CD4-positive, alpha-beta T cell (primary cell): ENCODE measurements at regions of chr11 and their contacts with region 1.

Region 1: DNA sequence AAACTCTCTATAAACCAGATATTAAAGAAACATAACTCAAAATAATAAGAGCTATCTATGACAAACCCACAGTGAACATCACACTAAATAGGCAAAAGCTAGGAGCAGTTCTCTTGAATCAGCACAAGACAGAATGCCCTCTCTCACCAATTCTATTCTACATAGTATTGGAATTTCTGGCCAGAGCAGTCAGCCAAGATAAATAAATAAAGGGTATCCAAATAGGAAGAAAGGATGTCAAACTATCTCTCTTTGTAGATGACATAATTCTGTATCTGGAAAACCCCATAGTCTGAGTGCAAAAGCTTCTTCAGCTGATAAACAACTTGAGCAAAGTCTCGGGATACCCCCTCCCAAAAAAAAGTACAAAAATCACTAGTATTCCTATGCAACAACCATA is 359.8 kb downstream of the LRRC4C start:
- DNase-seq: no peak
- ATAC-seq: no peak
- H3K4me3 ChIP-seq: no peak overlapping the region
- H3K4me3 Mint-ChIP-seq: no peak overlapping the region
- H3K27ac ChIP-seq: no peak overlapping the region
- H3K27ac Mint-ChIP-seq: no peak overlapping the region
- H3K4me1 ChIP-seq: no peaks in the 10 kb centered on the region
- H3K4me1 Mint-ChIP-seq: no peaks in the 10 kb centered on the region
- H3K27me3 ChIP-seq: no peaks in the 10 kb centered on the region
- H3K27me3 Mint-ChIP-seq: no peaks in the 10 kb centered on the region
- CTCF ChIP-seq: no peak

Region 2: DNA sequence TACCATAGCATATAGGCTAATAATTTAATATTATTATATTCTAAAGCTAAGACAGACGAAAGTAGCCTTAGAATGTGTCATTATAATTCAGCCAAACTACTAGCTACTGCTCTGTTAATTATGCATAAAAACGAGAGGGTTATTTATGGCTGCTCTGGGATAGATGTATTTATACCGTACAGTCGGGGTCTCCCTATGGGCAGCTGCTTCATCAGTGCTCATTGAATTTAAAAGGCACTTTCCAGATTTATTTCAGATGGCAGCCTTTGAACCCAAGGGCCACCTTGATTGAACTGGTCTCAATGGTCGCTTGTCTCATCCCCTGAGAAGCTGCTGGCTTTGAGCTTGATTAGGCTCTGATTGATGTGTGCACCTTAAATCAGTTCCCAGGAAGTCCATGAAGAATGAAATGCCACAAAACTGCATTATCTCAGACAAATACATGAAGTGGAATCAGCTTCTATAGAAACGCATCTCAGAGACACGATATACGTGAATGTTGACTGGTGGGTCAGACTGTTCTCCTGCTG is 17.8 kb before region 1 on chr11:
- CTCF ChIA-PET with region 1: no interaction called
- POLR2A ChIA-PET with region 1: no interaction called
- intact Hi-C with region 1: no loop called
- DNase-seq: no peak
- ATAC-seq: no peak
- H3K4me3 ChIP-seq: no peak overlapping the region
- H3K4me3 Mint-ChIP-seq: no peak overlapping the region
- H3K27ac ChIP-seq: no peak overlapping the region
- H3K27ac Mint-ChIP-seq: no peak overlapping the region
- H3K4me1 ChIP-seq: no peaks in the 10 kb centered on the region
- H3K4me1 Mint-ChIP-seq: no peaks in the 10 kb centered on the region
- H3K27me3 ChIP-seq: no peaks in the 10 kb centered on the region
- H3K27me3 Mint-ChIP-seq: no peaks in the 10 kb centered on the region
- CTCF ChIP-seq: no peak

Region 3: GRCh38 chr11:41115066-41115465 is 15.4 kb after region 1 on chr11:
- CTCF ChIA-PET with region 1: no interaction called
- POLR2A ChIA-PET with region 1: no interaction called
- intact Hi-C with region 1: loop called in 1 of 2 experiments (anchors 2 kb)
- DNase-seq: no peak
- ATAC-seq: no peak
- H3K4me3 ChIP-seq: no peak overlapping the region
- H3K4me3 Mint-ChIP-seq: no peak overlapping the region
- H3K27ac ChIP-seq: no peak overlapping the region
- H3K27ac Mint-ChIP-seq: no peak overlapping the region
- H3K4me1 ChIP-seq: no peaks in the 10 kb centered on the region
- H3K4me1 Mint-ChIP-seq: no peaks in the 10 kb centered on the region
- H3K27me3 ChIP-seq: no peaks in the 10 kb centered on the region
- H3K27me3 Mint-ChIP-seq: no peaks in the 10 kb centered on the region
- CTCF ChIP-seq: no peak